Natural killer cell (primary cell): ENCODE measurements at regions of chr2 and their contacts with region 1.

Region 1: GRCh38 chr2:46364797-46365457 is 67.7 kb downstream of the EPAS1 start:
- DNase-seq: peak in 1 of 2 donors; percentile 78
- ATAC-seq: peak in 1 of 3 donors; percentile 27
- H3K4me3 ChIP-seq: no peak overlapping the region
- H3K4me3 Mint-ChIP-seq: no peak overlapping the region
- H3K27ac ChIP-seq: no peak overlapping the region
- H3K27ac Mint-ChIP-seq: no peak overlapping the region
- H3K4me1 ChIP-seq: peaks cover 23% of the 10 kb centered on the region
- H3K4me1 Mint-ChIP-seq: peaks cover 37% of the 10 kb centered on the region in 2 donors
- H3K27me3 ChIP-seq: no peaks in the 10 kb centered on the region
- H3K27me3 Mint-ChIP-seq: peaks cover 13 to 23% of the 10 kb centered on the region in 2 donors
- CTCF ChIP-seq: peak; percentile 92

Region 2: GRCh38 chr2:46439582-46439981 is 74.7 kb after region 1 on chr2:
- intact Hi-C with region 1: loop called (anchors 1 kb)
- DNase-seq: peak; percentile 33 to 75
- ATAC-seq: peak; percentile 95 to 98 (median 97)
- H3K4me3 ChIP-seq: no peak overlapping the region
- H3K4me3 Mint-ChIP-seq: peak overlapping the region; percentile 73
- H3K27ac ChIP-seq: peak overlapping the region; percentile 30
- H3K27ac Mint-ChIP-seq: peak overlapping the region; percentile 75 to 79
- H3K4me1 ChIP-seq: peaks cover 22% of the 10 kb centered on the region
- H3K4me1 Mint-ChIP-seq: peaks cover 55 to 63% of the 10 kb centered on the region in 2 donors
- H3K27me3 ChIP-seq: peaks cover 11% of the 10 kb centered on the region
- H3K27me3 Mint-ChIP-seq: peaks cover 10 to 28% of the 10 kb centered on the region in 2 donors
- CTCF ChIP-seq: no peak